Activated naive CD4-positive, alpha-beta T cell treated with anti-CD3 and anti-CD28 coated beads for 36 hours (primary cell): ENCODE measurements at regions of chr3 and their contacts with region 1.

Region 1: GRCh38 chr3:39255503-39256325 is 24.1 kb downstream of the CX3CR1 start:
- DNase-seq: peak; percentile 61
- H3K4me3 Mint-ChIP-seq: no peak overlapping the region
- H3K27ac Mint-ChIP-seq: peak overlapping the region; percentile 72
- H3K4me1 Mint-ChIP-seq: peaks cover 19% of the 10 kb centered on the region
- H3K27me3 Mint-ChIP-seq: peaks cover 3% of the 10 kb centered on the region

Region 2: DNA sequence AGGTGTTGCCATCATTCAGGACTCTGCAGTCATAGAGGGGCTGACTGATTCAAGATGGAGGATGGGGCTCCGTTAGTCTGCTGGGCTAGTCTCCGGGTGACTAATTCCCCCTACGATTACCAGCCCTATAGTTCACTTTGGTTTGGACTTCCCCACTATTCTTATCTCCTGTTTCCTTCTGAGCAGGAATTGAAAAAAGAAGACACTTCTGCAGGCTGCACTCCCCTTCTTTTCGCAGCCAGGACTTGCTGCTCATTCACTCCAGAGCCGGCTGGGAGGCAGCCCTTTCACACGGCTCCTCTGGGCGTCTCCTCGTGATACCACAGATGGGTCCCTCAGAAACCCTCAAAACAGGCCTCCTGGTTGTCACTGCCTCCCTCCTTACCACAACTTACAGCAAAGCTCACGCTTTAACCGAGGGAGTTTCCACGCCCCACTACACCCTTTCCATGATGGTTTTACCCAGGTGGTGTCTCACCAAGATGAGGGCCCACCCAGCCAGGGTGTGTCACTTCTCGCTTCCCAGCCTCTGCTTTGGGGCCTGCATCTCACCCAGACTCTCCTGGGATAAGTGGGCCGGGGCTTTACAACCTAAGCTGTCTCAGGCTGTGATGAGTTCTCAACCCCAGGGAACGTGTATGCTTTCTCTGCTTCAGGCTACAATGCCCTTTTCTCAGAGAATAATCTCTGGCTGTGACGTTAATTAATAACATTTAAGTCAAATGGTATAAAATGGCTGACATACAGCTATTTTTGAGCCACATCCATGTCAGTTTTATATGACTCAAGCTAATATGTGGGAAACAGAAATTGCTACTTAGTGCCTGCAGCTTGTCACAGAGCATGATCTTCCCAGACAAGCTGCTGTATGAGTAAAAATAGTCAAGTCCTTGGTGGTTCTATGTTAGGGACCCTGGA is 12.2 kb after region 1 on chr3:
- CTCF ChIA-PET with region 1: no interaction called
- intact Hi-C with region 1: loop called (anchors 1 kb)
- DNase-seq: peak; percentile 83
- H3K4me3 Mint-ChIP-seq: peak overlapping the region; percentile 39
- H3K27ac Mint-ChIP-seq: peak overlapping the region; percentile 92
- H3K4me1 Mint-ChIP-seq: peaks cover 25% of the 10 kb centered on the region
- H3K27me3 Mint-ChIP-seq: no peaks in the 10 kb centered on the region

Region 3: DNA sequence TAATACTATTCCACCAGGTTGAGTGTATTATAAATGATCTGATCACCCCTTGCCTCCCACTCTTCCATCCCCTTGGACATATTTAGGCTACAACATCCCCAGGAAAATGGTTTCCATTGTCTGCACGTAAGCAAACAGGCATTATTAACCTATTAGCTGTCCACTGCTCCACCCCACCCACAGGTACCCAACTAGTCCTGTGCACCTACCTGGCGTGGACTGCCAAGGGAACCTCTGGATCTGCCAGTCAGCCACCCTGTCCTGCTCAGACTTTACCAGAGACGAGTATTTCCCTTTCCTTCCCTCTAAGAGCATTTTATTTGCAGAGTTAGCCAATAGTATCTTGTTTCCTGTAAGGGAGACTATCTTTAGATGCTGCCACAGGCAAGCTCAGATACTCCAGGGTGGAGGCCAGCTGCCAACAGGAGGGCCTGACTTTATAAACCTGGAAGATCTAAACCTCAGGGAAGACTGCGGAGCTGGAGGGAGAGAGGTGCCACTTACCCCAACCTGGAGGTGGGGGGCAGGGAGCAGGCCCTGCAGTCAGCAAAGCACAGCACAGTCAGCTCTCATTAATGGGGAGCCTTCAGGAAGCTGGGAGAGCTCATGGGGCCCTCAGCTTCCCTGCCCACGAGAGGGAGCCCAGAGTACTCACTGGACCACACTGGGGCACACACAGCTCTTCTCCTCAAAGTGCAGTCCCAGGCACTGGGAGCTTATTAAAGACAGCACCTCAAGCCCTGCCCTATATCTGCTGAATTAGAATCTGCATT is 24.2 kb after region 1 on chr3 and contains the start of gene CX3CR1:
- CTCF ChIA-PET with region 1: no interaction called
- intact Hi-C with region 1: no loop called
- DNase-seq: no peak
- H3K4me3 Mint-ChIP-seq: no peak within 1 kb of the TSS
- H3K27ac Mint-ChIP-seq: peak within 1 kb of the TSS; percentile 25
- H3K4me1 Mint-ChIP-seq: peaks cover 6% of the 10 kb centered on the region
- H3K27me3 Mint-ChIP-seq: no peaks in the 10 kb centered on the region
- total RNA-seq, gene CX3CR1: not detected

Region 4: GRCh38 chr3:40366203-40367162 is 1110.8 kb after region 1 on chr3:
- CTCF ChIA-PET with region 1: no interaction called
- intact Hi-C with region 1: no loop called
- DNase-seq: no peak
- H3K4me3 Mint-ChIP-seq: no peak overlapping the region
- H3K27ac Mint-ChIP-seq: no peak overlapping the region
- H3K4me1 Mint-ChIP-seq: no peaks in the 10 kb centered on the region
- H3K27me3 Mint-ChIP-seq: peaks cover 16% of the 10 kb centered on the region